Calu3 (cell line): ENCODE measurements at regions of chrX and their contacts with region 1.

Region 1: DNA sequence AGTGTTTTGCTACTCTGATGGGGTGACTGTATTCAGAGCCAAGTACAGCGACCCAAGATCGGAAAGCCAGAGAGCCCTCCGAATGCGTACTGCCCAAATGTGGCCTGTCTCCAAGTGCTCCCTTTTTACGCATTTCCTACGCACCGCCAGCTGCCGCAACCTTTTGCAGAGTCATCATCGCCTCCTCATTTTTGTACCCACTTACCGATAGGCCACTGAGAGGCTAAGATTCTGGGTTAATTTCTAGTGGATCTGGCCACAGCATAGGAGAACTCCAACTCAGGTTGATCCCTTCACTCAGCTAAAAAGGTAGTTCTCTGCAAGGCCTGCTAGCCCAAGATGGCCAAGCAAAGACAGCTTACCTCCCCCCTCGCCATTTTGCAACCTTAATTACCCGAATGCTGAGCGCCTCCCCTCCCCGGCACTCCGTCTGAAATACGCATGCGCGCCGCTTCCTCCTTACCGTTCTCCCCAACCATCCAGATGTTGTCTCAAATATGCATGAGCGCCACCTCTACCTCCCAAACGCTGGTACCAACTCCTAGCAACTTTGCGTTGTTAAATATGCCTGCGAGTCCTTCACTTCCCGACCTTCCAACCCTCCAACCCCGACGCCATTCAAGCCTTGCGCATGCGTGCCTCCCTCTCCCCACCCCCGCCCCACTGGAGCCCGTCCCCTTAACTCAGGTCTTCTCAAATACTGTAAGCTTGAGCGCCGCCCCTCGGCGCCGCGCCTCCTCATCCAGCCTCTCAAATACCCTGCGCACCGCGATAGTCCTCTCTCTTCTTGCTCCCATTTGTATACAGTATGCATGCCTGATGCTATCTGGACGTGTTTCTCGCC is 11.8 kb upstream of the ZCCHC13 start:
- DNase-seq: peak; percentile 80
- H3K4me3 Mint-ChIP-seq: peak overlapping the region; percentile 95
- H3K27ac Mint-ChIP-seq: peak overlapping the region; percentile 99
- H3K4me1 Mint-ChIP-seq: no peaks in the 10 kb centered on the region
- H3K27me3 Mint-ChIP-seq: no peaks in the 10 kb centered on the region
- CTCF ChIP-seq: no peak

Region 2: DNA sequence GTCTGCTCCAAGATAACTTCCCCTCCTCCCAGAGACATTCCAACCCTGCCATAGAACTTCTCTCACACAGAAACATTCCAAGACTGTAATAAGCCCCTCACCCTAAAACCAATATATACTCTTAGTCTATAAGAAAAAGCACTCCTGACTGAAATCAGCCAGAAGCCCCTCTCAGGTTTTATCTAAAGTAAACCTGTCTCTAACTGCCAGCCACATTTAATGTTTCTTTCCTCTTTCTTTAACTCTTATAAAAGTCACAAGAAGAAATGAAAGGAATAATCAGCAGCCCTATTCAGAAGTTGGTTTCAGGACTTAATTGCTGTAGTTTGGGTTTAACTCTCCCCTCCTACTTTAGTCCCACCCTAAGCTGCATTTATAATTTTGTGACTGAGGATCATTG is 153.2 kb before region 1 on chrX:
- CTCF ChIA-PET with region 1: no interaction called
- intact Hi-C with region 1: no loop called
- DNase-seq: no peak
- H3K4me3 Mint-ChIP-seq: no peak overlapping the region
- H3K27ac Mint-ChIP-seq: no peak overlapping the region
- H3K4me1 Mint-ChIP-seq: no peaks in the 10 kb centered on the region
- H3K27me3 Mint-ChIP-seq: no peaks in the 10 kb centered on the region
- CTCF ChIP-seq: no peak

Region 3: GRCh38 chrX:74232859-74233258 is 59.3 kb before region 1 on chrX:
- CTCF ChIA-PET with region 1: no interaction called
- intact Hi-C with region 1: loop called (anchors 5 kb)
- DNase-seq: peak; percentile 32
- H3K4me3 Mint-ChIP-seq: no peak overlapping the region
- H3K27ac Mint-ChIP-seq: no peak overlapping the region
- H3K4me1 Mint-ChIP-seq: peaks cover 7% of the 10 kb centered on the region
- H3K27me3 Mint-ChIP-seq: no peaks in the 10 kb centered on the region
- CTCF ChIP-seq: no peak

Region 4: GRCh38 chrX:74262452-74263209 is 29.6 kb before region 1 on chrX:
- CTCF ChIA-PET with region 1: no interaction called
- intact Hi-C with region 1: no loop called
- DNase-seq: no peak
- H3K4me3 Mint-ChIP-seq: no peak overlapping the region
- H3K27ac Mint-ChIP-seq: no peak overlapping the region
- H3K4me1 Mint-ChIP-seq: no peaks in the 10 kb centered on the region
- H3K27me3 Mint-ChIP-seq: no peaks in the 10 kb centered on the region
- CTCF ChIP-seq: no peak